Panc1 (cell line): ENCODE measurements at regions of chr15 and their contacts with region 1.

Region 1: GRCh38 chr15:50653156-50653745 is 33.3 kb downstream of the TRPM7 start:
- DNase-seq: no peak
- ATAC-seq: no peak
- H3K4me3 ChIP-seq: no peak overlapping the region
- H3K27ac ChIP-seq: no peak overlapping the region
- H3K4me1 ChIP-seq: no peaks in the 10 kb centered on the region
- H3K27me3 ChIP-seq: no peaks in the 10 kb centered on the region
- CTCF ChIP-seq: no peak

Region 2: DNA sequence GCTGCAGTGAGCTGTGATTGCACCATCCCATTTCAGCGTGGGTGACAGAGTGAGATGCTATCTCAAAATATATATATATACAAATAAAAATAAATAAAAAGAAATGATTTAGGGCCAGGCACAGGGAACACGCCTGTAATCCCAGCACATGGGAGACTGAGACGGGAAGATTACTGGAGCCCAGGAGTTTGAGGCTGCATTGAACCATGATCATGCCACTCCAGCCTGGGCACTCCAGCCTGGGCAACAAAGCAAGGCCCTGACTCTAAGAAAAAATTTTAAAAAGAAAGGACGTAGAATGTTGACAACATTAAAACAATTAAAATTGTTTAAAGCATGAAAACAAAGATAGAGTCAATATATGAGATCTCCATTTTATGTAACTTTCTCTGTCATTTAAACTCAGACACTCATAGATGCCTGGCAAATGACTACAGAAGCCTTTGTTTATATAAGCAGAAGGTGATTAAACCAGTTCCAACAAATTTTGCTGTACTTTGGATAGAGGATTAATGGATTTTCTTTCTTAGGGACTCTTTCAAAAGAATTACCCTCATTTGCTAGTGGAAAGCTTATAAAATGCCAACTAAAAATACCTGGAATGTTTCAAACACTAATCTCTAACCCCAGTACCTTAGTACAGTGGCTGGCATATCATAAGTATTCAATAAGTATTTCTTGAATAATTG is 44.0 kb after region 1 on chr15:
- CTCF ChIA-PET with region 1: no interaction called
- POLR2A ChIA-PET with region 1: interaction called, 12 read pairs
- in situ Hi-C with region 1: no loop called
- intact Hi-C with region 1: no loop called
- DNase-seq: no peak
- ATAC-seq: no peak
- H3K4me3 ChIP-seq: no peak overlapping the region
- H3K27ac ChIP-seq: no peak overlapping the region
- H3K4me1 ChIP-seq: no peaks in the 10 kb centered on the region
- H3K27me3 ChIP-seq: no peaks in the 10 kb centered on the region
- CTCF ChIP-seq: no peak

Region 3: GRCh38 chr15:50945725-50946124 is 292.5 kb after region 1 on chr15:
- CTCF ChIA-PET with region 1: no interaction called
- POLR2A ChIA-PET with region 1: no interaction called
- in situ Hi-C with region 1: no loop called
- intact Hi-C with region 1: no loop called
- DNase-seq: no peak
- ATAC-seq: no peak
- H3K4me3 ChIP-seq: no peak overlapping the region
- H3K27ac ChIP-seq: no peak overlapping the region
- H3K4me1 ChIP-seq: no peaks in the 10 kb centered on the region
- H3K27me3 ChIP-seq: no peaks in the 10 kb centered on the region
- CTCF ChIP-seq: no peak

Region 4: DNA sequence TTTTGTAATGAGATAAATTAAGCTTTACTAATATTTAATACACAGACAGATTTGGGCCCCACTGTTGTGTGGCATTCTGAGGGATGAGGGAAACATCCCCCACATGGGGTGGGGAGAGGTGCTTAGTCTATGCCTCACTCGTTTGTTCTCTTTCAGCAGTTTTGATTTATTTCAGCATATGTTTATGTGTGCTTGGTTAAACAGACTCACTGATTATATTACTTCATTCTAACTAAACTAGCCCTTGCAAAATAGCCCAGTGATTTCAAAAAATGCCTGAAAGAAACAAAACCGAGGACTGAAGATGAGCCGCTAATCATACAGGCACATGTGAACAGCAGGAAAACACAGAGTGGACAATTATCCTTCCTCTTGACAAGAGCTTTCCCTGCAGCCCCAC is 414.3 kb after region 1 on chr15:
- CTCF ChIA-PET with region 1: no interaction called
- POLR2A ChIA-PET with region 1: no interaction called
- in situ Hi-C with region 1: no loop called
- intact Hi-C with region 1: no loop called
- DNase-seq: no peak
- ATAC-seq: no peak
- H3K4me3 ChIP-seq: no peak overlapping the region
- H3K27ac ChIP-seq: no peak overlapping the region
- H3K4me1 ChIP-seq: no peaks in the 10 kb centered on the region
- H3K27me3 ChIP-seq: no peaks in the 10 kb centered on the region
- CTCF ChIP-seq: no peak